GM12878 (cell line): ENCODE measurements at regions of chr4 and their contacts with region 1.

Region 1: DNA sequence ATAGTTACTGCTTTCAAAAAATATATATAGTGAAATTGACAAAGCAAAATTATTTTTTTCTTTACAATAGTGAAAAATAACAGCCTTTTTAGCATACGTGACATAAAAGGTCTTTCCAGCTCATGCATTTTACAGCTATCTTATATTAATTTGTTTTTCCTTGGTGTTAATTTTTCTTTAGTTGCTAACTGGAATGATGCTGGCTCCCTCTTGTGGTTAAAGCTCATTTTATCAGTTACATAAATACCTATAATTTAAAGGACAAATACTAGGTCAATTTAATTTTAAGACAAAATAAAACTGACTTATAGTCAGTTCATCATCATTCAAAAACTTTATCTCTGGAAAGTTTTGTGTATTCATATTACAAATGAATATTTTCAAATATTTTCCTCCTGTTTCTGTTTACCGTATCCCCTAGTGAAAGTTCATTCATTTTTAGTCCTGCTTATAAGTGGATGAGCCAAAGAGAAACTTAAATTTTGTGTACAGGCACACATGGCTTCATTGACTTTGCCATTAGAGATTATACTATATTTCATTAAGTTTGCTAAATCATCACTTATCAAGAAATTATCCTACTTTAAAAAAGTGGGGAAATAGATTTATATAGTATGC is 9.9 kb upstream of the ANAPC4 start:
- DNase-seq: no peak
- ATAC-seq: peak; percentile 31; the same call in 1 of the 3 replicates
- H3K4me3 ChIP-seq: no peak overlapping the region
- H3K27ac ChIP-seq: no peak overlapping the region
- H3K4me1 ChIP-seq: no peaks in the 10 kb centered on the region
- H3K27me3 ChIP-seq: no peaks in the 10 kb centered on the region
- CTCF ChIP-seq: peak in 2 of 3 experiments; percentile 22 to 46; a peak in 4 of 6 replicates
- EP300 ChIP-seq: no peak
- POLR2A ChIP-seq: no peak
- RAD21 ChIP-seq: peak; percentile 80

Region 2: GRCh38 chr4:24229976-24230375 is 1137.1 kb before region 1 on chr4:
- CTCF ChIA-PET with region 1: no interaction called
- POLR2A ChIA-PET with region 1: no interaction called
- RAD21 ChIA-PET with region 1: no interaction called
- SMC1A ChIA-PET with region 1: no interaction called
- in situ Hi-C with region 1: no loop called
- intact Hi-C with region 1: no loop called
- DNase-seq: no peak
- ATAC-seq: no peak
- H3K4me3 ChIP-seq: no peak overlapping the region
- H3K27ac ChIP-seq: no peak overlapping the region
- H3K4me1 ChIP-seq: no peaks in the 10 kb centered on the region
- H3K27me3 ChIP-seq: no peaks in the 10 kb centered on the region
- CTCF ChIP-seq: no peak
- EP300 ChIP-seq: no peak
- POLR2A ChIP-seq: no peak
- RAD21 ChIP-seq: no peak

Region 3: GRCh38 chr4:25144870-25145481 is 222.1 kb before region 1 on chr4:
- CTCF ChIA-PET with region 1: interaction called, 12 read pairs
- POLR2A ChIA-PET with region 1: no interaction called
- RAD21 ChIA-PET with region 1: no interaction called
- SMC1A ChIA-PET with region 1: interaction called, 8 read pairs
- in situ Hi-C with region 1: no loop called
- intact Hi-C with region 1: no loop called
- DNase-seq: no peak
- ATAC-seq: peak; percentile 63
- H3K4me3 ChIP-seq: no peak overlapping the region
- H3K27ac ChIP-seq: no peak overlapping the region
- H3K4me1 ChIP-seq: no peaks in the 10 kb centered on the region
- H3K27me3 ChIP-seq: no peaks in the 10 kb centered on the region
- CTCF ChIP-seq: peak; percentile 35 to 52 (median 52); a peak in 5 of 6 replicates
- EP300 ChIP-seq: no peak
- POLR2A ChIP-seq: no peak
- RAD21 ChIP-seq: peak; percentile 56

Region 4: GRCh38 chr4:25159884-25160713 is 207.0 kb before region 1 on chr4 and contains the start of gene SEPSECS:
- CTCF ChIA-PET with region 1: interaction called, 14 read pairs
- POLR2A ChIA-PET with region 1: interaction called, 5 read pairs
- RAD21 ChIA-PET with region 1: interaction called, 4 read pairs
- SMC1A ChIA-PET with region 1: interaction called, 11 read pairs
- in situ Hi-C with region 1: no loop called
- intact Hi-C with region 1: no loop called
- DNase-seq: peak; percentile 96
- ATAC-seq: peak; percentile 90
- H3K4me3 ChIP-seq: peak within 1 kb of the TSS; percentile 94
- H3K27ac ChIP-seq: peak within 1 kb of the TSS; percentile 96
- H3K4me1 ChIP-seq: peaks cover 4% of the 10 kb centered on the region
- H3K27me3 ChIP-seq: no peaks in the 10 kb centered on the region
- CTCF ChIP-seq: no peak
- EP300 ChIP-seq: no peak
- POLR2A ChIP-seq: peak; percentile 96
- RAD21 ChIP-seq: no peak
- polyA plus RNA-seq, gene SEPSECS: 2.8 to 2.9 TPM

Region 5: DNA sequence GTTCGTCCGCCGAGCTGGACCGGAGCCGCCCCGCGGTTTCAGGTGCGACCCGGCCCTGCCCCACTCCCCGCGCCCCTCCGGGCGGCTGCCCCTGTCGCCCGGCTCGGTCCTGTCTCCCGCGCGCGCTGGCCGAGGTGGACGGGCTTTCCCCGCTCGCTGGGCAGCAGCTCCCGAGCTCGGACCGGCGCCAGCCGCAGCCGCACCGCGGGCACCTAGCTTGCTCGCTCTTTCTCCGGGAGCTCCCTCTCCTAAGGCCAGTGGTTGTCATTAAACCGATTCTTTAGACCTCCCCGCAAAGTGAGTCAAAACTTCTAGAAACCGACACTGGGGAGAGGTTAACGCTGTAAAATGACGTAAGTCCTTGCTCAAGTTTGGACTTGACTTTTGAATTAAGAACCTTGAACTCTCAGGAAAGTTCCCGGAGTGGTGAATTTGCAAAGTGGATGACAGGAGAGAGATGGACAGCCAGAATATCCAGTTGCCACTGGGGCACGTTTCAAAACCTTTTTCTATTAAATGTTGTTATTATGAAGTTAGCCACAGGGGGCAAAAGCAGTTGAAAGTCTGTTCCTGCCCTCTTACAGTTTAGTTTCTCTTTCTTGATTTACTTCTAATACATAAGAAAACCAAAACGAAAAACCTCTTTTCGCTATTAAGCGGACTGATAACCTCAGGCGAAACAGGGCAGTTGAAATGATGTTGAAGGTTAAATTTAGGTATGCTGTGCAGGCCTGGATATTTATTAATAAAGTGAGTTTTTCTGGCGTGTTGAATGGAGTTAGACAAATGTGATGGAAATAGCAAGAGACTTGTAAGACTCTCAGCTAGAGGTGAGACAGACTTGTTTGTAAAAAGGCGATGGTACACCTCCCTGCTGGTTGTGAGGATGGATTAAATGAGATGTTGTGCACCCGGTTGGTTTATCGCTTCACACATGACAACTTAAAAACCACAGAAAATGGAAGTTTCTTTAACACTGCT is 132.4 kb before region 1 on chr4:
- CTCF ChIA-PET with region 1: interaction called, 29 read pairs
- POLR2A ChIA-PET with region 1: no interaction called
- RAD21 ChIA-PET with region 1: interaction called, 18 read pairs
- SMC1A ChIA-PET with region 1: interaction called, 10 read pairs
- in situ Hi-C with region 1: no loop called
- intact Hi-C with region 1: no loop called
- DNase-seq: peak; percentile 78
- ATAC-seq: peak; percentile 76
- H3K4me3 ChIP-seq: peak overlapping the region; percentile 78
- H3K27ac ChIP-seq: peak overlapping the region; percentile 87
- H3K4me1 ChIP-seq: peaks cover 11% of the 10 kb centered on the region
- H3K27me3 ChIP-seq: no peaks in the 10 kb centered on the region
- CTCF ChIP-seq: peak; percentile 41 to 60 (median 44); a peak in 5 of 6 replicates
- EP300 ChIP-seq: 0 out of 4 replicates have a peak, but pooled peaks of 1 of the 2 experiments have one; percentile 16
- POLR2A ChIP-seq: no peak
- RAD21 ChIP-seq: peak; percentile 41

Region 6: GRCh38 chr4:25330905-25331808 is 36.0 kb before region 1 on chr4:
- CTCF ChIA-PET with region 1: interaction called, 20 read pairs
- POLR2A ChIA-PET with region 1: no interaction called
- RAD21 ChIA-PET with region 1: interaction called, 3 read pairs
- SMC1A ChIA-PET with region 1: interaction called, 11 read pairs
- in situ Hi-C with region 1: no loop called
- intact Hi-C with region 1: no loop called
- DNase-seq: no peak
- ATAC-seq: peak; percentile 91
- H3K4me3 ChIP-seq: peak overlapping the region; percentile 63
- H3K27ac ChIP-seq: peak overlapping the region; percentile 68
- H3K4me1 ChIP-seq: peaks cover 4% of the 10 kb centered on the region
- H3K27me3 ChIP-seq: no peaks in the 10 kb centered on the region
- CTCF ChIP-seq: no peak
- EP300 ChIP-seq: no peak
- POLR2A ChIP-seq: no peak
- RAD21 ChIP-seq: no peak